A549 (cell line): ENCODE measurements at regions of chr12 and their contacts with region 1.

Region 1: DNA sequence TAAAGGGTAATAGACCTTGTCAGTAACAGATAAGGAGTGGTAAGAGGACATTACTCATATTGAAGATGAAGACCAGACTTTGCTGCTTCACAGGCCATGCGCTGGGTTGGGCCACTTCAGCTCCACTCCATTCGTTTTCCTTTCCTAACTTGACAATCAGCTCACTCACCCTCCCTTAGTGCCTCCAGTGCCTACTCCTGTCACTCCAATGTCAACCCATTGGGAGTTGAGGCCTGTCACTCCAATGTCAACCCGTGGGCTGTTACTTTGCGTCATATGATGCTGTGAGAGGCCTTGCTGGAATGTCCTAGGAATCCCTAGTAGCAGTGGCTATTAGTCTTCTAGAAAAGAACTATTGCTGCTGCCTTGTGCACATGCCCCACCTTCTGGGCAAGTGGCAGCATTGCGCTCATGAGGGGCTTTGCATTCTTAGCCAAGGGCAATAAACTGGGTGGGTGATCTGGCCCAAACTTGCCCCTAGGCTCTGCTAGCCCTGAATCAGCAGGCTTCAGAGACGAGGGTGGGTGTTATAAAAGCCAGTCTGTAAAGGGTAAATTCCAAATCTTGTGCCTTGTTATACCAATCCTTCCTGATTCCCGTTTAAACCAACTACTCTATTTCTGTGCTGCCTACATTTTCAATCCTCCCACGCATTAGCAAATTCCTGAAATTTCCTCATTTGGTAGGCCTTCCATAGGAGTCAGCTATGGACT is 36.1 kb downstream of the BAZ2A start:
- DNase-seq: peak; percentile 75 to 78
- ATAC-seq: peak; percentile 71 to 82
- H3K4me3 ChIP-seq: no peak overlapping the region
- H3K27ac ChIP-seq: no peak overlapping the region
- H3K4me1 ChIP-seq: 0 out of 3 replicates have a peak, but pooled peaks cover 4% of the 10 kb centered on the region
- CTCF ChIP-seq: peak; percentile 79
- EP300 ChIP-seq: no peak
- POLR2A ChIP-seq: no peak
- RAD21 ChIP-seq: peak; percentile 68 to 85

Region 2: GRCh38 chr12:56468216-56469006 is 125.7 kb before region 1 on chr12 and contains the start of gene SPRYD4:
- CTCF ChIA-PET with region 1: no interaction called
- POLR2A ChIA-PET with region 1: no interaction called
- DNase-seq: peak; percentile 92 to 96
- ATAC-seq: peak; percentile 94 to 96
- H3K4me3 ChIP-seq: peak within 1 kb of the TSS; percentile 90
- H3K27ac ChIP-seq: peak within 1 kb of the TSS; percentile 89 to 95
- H3K4me1 ChIP-seq: peaks cover 7% of the 10 kb centered on the region; the same call in 2 of the 3 replicates
- CTCF ChIP-seq: peak; percentile 55
- EP300 ChIP-seq: no peak
- POLR2A ChIP-seq: peak; percentile 92
- RAD21 ChIP-seq: 0 out of 5 replicates have a peak, but pooled peaks of 1 of the 2 experiments have one; percentile 19
- polyA plus RNA-seq, gene SPRYD4: 3.5 and 3.8 TPM in 2 replicates

Region 3: GRCh38 chr12:56521590-56522371 is 72.3 kb before region 1 on chr12 and contains the start of gene RBMS2:
- CTCF ChIA-PET with region 1: interaction called, 282 read pairs
- POLR2A ChIA-PET with region 1: interaction called, 4 read pairs
- DNase-seq: peak; percentile 81 to 96
- ATAC-seq: peak; percentile 91 to 95
- H3K4me3 ChIP-seq: peak within 1 kb of the TSS; percentile 66
- H3K27ac ChIP-seq: peak within 1 kb of the TSS; percentile 87 to 89
- H3K4me1 ChIP-seq: peaks cover 70% of the 10 kb centered on the region
- CTCF ChIP-seq: no peak
- EP300 ChIP-seq: no peak
- POLR2A ChIP-seq: no peak
- RAD21 ChIP-seq: no peak
- polyA plus RNA-seq, gene RBMS2: 46.4 and 61.6 TPM in 2 replicates

Region 4: DNA sequence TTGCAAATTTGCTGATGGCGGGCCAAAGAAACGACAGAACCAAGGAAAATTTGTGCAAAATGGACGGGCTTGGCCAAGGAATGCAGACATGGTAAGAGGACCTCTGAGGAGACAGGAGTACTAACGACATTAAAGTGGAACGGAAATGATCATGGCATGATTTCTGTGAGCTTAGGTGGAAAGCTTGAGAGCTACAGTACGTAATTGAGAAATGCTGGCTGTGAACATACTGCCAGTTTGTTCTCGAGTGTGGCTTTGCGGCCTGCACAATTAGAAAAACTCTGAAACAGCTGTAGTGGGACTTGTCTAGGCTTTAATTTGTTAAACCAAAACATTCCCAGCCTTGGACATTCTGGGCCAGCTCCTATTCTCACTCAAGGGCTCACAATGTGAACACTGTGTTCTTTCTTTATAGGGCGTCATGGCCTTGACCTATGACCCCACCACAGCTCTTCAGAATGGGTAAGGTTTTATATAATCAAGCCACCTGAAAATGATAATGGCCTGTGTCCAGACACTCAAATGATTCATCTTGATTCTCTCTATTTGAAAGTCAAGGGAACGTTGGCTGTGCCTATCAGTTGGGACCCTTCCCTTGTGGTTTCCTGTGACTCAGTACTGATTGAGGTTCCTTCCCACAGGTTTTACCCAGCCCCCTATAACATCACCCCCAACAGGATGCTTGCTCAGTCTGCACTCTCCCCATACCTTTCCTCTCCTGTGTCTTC is 12.5 kb before region 1 on chr12:
- CTCF ChIA-PET with region 1: interaction called, 21 read pairs
- POLR2A ChIA-PET with region 1: no interaction called
- DNase-seq: no peak
- ATAC-seq: peak; percentile 34 to 39; a peak in 3 of 6 replicates
- H3K4me3 ChIP-seq: no peak overlapping the region
- H3K27ac ChIP-seq: no peak overlapping the region
- H3K4me1 ChIP-seq: peaks cover 8% of the 10 kb centered on the region
- CTCF ChIP-seq: no peak
- EP300 ChIP-seq: no peak
- POLR2A ChIP-seq: no peak
- RAD21 ChIP-seq: no peak